ENCODE measurements at regions of chr21 and their contacts with region 1.

Region 1: GRCh38 chr21:39349211-39350093 is 564 bp upstream of the HMGN1 start:
- DNase-seq: peak; percentile 95
- ATAC-seq: peak; percentile 84
- H3K4me3 Mint-ChIP-seq: peak overlapping the region; percentile 97
- H3K27ac Mint-ChIP-seq: peak overlapping the region; percentile 97
- H3K4me1 Mint-ChIP-seq: peaks cover 41% of the 10 kb centered on the region
- H3K27me3 Mint-ChIP-seq: no peaks in the 10 kb centered on the region
- CTCF ChIP-seq: no peak

Region 2: GRCh38 chr21:39313571-39314142 is 35.8 kb before region 1 on chr21 and contains the start of gene BRWD1:
- CTCF ChIA-PET with region 1: interaction called, 3 read pairs
- POLR2A ChIA-PET with region 1: interaction called, 84 read pairs
- intact Hi-C with region 1: loop called (anchors 1 kb)
- DNase-seq: peak; percentile 86
- ATAC-seq: peak; percentile 49
- H3K4me3 Mint-ChIP-seq: peak within 1 kb of the TSS; percentile 94
- H3K27ac Mint-ChIP-seq: peak within 1 kb of the TSS; percentile 92
- H3K4me1 Mint-ChIP-seq: peaks cover 47% of the 10 kb centered on the region
- H3K27me3 Mint-ChIP-seq: no peaks in the 10 kb centered on the region
- CTCF ChIP-seq: no peak
- total RNA-seq, gene BRWD1: 36.9 and 40.3 TPM in 2 replicates

Region 3: DNA sequence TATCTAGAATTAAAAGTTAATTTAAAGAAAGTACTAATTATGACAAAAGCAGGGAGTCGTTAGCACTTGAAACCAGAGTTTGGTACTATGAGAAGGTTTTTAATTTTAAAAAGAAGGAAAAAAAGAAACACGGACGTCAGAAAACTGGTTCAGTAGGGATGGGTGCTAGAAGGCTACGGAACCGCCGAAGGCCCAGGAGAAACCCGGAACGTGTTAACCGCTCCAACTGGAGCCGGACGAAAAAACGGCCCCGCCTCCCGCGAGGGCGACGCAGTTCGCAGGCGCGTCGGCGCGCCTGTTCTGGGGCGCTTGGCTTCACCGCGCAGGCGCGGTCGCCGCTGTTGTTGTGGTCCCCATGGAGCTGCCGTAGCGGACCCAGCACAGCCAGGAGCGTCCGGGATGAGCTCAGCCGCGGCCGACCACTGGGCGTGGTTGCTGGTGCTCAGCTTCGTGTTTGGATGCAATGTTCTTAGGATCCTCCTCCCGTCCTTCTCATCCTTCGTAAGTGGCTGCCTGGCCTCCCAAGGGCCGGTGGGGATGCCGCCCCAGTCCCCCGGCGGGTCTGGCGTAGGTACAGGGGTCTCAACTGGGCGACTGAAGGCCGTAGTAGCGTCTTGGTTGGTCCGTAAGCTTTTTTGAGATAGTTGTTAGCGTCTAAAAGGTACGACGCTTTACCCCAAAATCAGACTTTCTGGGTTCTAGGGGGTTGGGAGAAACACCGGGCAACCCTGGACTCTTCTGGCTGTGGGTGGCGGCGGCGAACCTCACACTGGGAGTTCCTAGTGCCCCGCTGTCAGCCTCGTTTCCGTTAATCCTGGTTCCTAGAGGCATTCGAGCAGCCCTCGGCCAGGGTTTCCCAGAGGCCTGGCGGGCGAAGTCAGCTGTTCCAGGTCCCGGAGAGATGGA is 30.8 kb after region 1 on chr21:
- CTCF ChIA-PET with region 1: no interaction called
- POLR2A ChIA-PET with region 1: interaction called, 24 read pairs
- intact Hi-C with region 1: no loop called
- DNase-seq: peak; percentile 82
- ATAC-seq: peak; percentile 99
- H3K4me3 Mint-ChIP-seq: peak overlapping the region; percentile 93
- H3K27ac Mint-ChIP-seq: peak overlapping the region; percentile 78
- H3K4me1 Mint-ChIP-seq: peaks cover 12% of the 10 kb centered on the region
- H3K27me3 Mint-ChIP-seq: no peaks in the 10 kb centered on the region
- CTCF ChIP-seq: no peak

Region 4: GRCh38 chr21:39445321-39446269 is 96.1 kb after region 1 on chr21 and contains the start of gene LCA5L:
- CTCF ChIA-PET with region 1: no interaction called
- POLR2A ChIA-PET with region 1: no interaction called
- intact Hi-C with region 1: loop called (anchors 1 kb)
- DNase-seq: peak; percentile 95
- ATAC-seq: peak; percentile 91
- H3K4me3 Mint-ChIP-seq: peak within 1 kb of the TSS; percentile 94
- H3K27ac Mint-ChIP-seq: peak within 1 kb of the TSS; percentile 95
- H3K4me1 Mint-ChIP-seq: peaks cover 12% of the 10 kb centered on the region
- H3K27me3 Mint-ChIP-seq: peaks cover 12% of the 10 kb centered on the region
- CTCF ChIP-seq: no peak
- total RNA-seq, gene LCA5L: 0.33 and 0.86 TPM in 2 replicates

Region 5: GRCh38 chr21:39681831-39682230 is 332.4 kb after region 1 on chr21:
- CTCF ChIA-PET with region 1: no interaction called
- POLR2A ChIA-PET with region 1: no interaction called
- intact Hi-C with region 1: no loop called
- DNase-seq: no peak
- ATAC-seq: no peak
- H3K4me3 Mint-ChIP-seq: no peak overlapping the region
- H3K27ac Mint-ChIP-seq: no peak overlapping the region
- H3K4me1 Mint-ChIP-seq: no peaks in the 10 kb centered on the region
- H3K27me3 Mint-ChIP-seq: no peaks in the 10 kb centered on the region
- CTCF ChIP-seq: no peak